ENCODE measurements at regions of chr15 and their contacts with region 1.

Region 1: DNA sequence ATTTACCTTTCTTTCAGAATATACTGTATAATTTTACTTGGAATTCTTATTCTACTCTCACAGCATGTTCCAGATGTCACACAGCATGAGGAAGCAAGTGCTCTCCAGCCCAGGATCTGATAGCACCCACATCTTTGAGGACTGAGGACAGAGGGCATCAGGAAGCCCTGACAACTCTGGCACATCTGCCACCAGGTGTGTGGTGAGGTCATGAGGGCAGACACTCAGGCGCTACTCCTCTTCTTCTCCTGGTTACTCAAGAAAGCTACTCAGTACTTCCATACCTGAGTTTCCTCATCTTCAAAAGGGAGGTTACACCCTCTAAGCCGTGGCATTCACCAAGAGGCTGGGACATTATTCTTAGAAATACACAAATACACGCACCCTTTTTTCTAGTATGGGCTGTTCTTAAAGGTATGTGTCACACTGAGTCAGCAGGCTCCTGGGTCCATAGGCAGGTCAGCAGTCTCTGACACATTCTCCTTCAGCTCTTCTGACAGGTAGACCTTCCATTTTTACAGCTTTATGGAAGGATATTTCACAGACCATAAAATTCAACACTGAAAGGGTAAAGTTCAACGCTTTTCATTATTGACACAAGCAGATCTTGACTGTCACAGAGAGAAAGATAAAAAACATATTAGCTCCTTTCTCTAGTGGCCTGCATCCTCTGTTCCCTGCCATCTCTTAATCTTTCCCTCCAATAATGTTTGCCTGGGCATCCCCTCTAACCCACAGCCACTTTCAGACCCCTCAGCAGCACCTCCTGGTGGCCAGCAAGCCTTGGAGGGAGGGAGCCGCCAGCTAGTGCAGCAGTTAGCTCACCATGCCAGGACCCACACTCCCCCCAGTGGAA is 103.2 kb upstream of the TJP1 start:
- DNase-seq: peak; percentile 55 to 81 (median 72)
- H3K4me3 ChIP-seq: no peak overlapping the region
- H3K27ac ChIP-seq: peak overlapping the region in 1 of 5 donors; percentile 55
- H3K4me1 ChIP-seq: no peaks in the 10 kb centered on the region
- H3K27me3 ChIP-seq: no peaks in the 10 kb centered on the region
- CTCF ChIP-seq: peak; percentile 52 to 86 (median 76)
- POLR2A ChIP-seq: no peak

Region 2: GRCh38 chr15:29844284-29844913 is 81.1 kb before region 1 on chr15:
- intact Hi-C with region 1: loop called in 1 of 2 experiments (anchors 10 kb)
- DNase-seq: no peak
- H3K4me3 ChIP-seq: no peak overlapping the region
- H3K27ac ChIP-seq: no peak overlapping the region
- H3K4me1 ChIP-seq: peaks cover 5 to 6% of the 10 kb centered on the region in 2 donors
- H3K27me3 ChIP-seq: no peaks in the 10 kb centered on the region
- CTCF ChIP-seq: no peak
- POLR2A ChIP-seq: no peak

Region 3: GRCh38 chr15:29870495-29871151 is 54.8 kb before region 1 on chr15:
- intact Hi-C with region 1: no loop called
- DNase-seq: peak; percentile 44 to 84 (median 59)
- H3K4me3 ChIP-seq: peak overlapping the region in 1 of 4 donors; percentile 1
- H3K27ac ChIP-seq: peak overlapping the region in 3 of 5 donors; percentile 13 to 63 (median 45)
- H3K4me1 ChIP-seq: peaks cover 5 to 30% of the 10 kb centered on the region in 2 donors
- H3K27me3 ChIP-seq: no peaks in the 10 kb centered on the region
- CTCF ChIP-seq: no peak
- POLR2A ChIP-seq: no peak

Region 4: DNA sequence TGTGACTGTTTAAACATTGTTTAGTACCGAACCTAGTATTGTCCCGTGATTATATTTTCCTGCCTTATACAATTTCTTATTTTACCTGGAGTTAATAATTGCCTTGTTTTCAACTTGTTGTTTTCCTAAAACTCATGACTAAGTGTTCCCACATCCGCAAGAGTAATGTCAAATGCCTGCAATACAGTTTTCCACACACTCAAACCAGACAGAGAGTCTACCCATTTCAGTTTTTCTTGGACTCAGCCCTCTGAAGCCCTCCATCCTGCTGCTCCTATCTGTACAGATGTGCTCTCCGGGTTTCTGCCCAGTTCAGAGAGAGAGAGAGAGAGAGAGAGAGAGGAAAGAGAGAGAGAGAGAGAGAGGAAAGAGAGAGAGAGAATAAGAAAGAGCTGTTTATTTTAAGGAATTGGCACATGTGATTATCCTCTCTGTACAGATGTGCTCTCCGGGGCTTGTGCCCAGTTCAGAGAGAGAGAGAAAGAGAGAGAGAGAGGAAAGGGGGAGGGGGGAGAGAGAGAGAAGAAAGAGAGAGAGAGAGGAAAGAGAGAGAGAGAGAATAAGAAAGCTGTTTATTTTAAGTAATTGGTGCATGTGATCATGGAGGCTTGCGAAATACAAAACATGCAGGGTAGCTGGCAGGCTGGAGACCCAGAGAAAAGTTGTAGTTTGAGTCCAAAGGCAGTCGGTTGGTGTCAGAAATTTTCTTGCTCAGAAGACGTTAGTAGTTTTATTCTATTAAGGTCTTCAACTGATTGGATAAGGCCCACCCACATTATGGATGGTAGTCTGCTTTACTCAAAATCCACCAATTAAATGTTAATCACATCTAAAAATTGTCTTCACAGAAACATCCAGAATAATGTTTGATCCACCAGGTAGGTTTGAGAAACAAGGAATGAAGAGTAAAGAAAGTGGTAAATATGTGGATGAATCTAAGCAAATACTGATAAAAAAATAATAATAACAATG is 53.2 kb after region 1 on chr15:
- intact Hi-C with region 1: no loop called
- DNase-seq: no peak
- H3K4me3 ChIP-seq: no peak overlapping the region
- H3K27ac ChIP-seq: no peak overlapping the region
- H3K4me1 ChIP-seq: no peaks in the 10 kb centered on the region
- H3K27me3 ChIP-seq: no peaks in the 10 kb centered on the region
- CTCF ChIP-seq: no peak
- POLR2A ChIP-seq: no peak